ENCODE measurements at regions of chr2 and their contacts with region 1.

Region 1: DNA sequence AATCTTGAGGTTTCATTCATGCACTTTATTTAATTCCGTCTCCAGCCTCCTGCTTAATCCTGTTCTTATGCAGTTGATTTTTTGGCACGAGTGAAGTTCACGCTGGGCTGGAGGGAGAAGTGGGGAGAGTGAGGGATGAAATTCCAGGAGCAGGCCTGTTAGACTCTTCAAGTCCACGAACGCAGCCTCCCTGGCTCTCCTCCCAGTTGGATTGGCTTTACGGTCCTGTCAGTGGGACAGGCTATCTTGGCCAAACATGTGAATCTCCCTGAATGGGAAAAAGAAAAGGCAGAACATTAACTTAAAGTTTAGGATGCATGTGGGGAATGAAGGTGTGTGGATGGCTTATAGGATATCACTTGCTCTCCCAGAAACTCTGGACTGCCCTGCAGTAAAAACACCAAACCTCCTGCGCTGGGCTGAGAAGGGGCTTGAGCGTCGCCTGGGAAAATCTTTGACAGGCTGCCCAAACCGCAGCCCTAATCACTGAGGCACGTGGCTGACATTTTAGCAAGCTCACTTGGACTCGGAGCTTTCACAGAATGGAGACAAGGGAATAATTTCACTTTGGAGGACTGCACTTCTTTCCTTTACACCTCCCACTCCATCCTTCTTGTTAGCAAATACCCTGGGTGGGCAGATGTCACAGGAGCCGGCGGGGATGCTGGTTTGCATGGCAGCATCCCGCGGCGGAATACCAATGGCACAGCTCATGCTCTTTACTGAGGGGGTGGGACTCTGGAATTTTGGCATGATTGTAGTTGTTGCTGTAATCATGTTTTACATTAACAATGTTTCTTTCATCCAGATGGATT is 93.9 kb downstream of the ACKR3 start:
- DNase-seq: peak; percentile 94
- H3K4me3 ChIP-seq: no peak overlapping the region
- H3K27ac ChIP-seq: peak overlapping the region; percentile 61 to 82 (median 76)
- H3K4me1 ChIP-seq: peaks cover 0 to 53% (median 49%) of the 10 kb centered on the region in 4 donors
- H3K27me3 ChIP-seq: no peaks in the 10 kb centered on the region
- CTCF ChIP-seq: no peak
- EP300 ChIP-seq: peak in 3 of 4 donors; percentile 7 to 63 (median 16)
- POLR2A ChIP-seq: no peak

Region 2: GRCh38 chr2:236569573-236569973 is 93.9 kb before region 1 on chr2 and contains the start of gene ACKR3:
- intact Hi-C with region 1: loop called (anchors 5 kb)
- DNase-seq: peak; percentile 92
- H3K4me3 ChIP-seq: peak within 1 kb of the TSS; percentile 28 to 57 (median 46)
- H3K27ac ChIP-seq: peak within 1 kb of the TSS; percentile 85 to 93 (median 87)
- H3K4me1 ChIP-seq: peaks cover 0 to 76% (median 47%) of the 10 kb centered on the region in 4 donors
- H3K27me3 ChIP-seq: no peaks in the 10 kb centered on the region
- CTCF ChIP-seq: peak in 3 of 4 experiments; percentile 30 to 44 (median 32)
- EP300 ChIP-seq: no peak
- POLR2A ChIP-seq: peak in 1 of 2 donors; percentile 60
- total RNA-seq, gene ACKR3: 17.0 to 39.1 (median 21.6) TPM